ENCODE measurements at regions of chr18 and their contacts with region 1.

Region 1: GRCh38 chr18:13629841-13630715 is 96.3 kb downstream of the FAM210A start:
- DNase-seq: no peak
- H3K4me3 ChIP-seq: peak overlapping the region in 1 of 4 donors; percentile 22
- H3K27ac ChIP-seq: peak overlapping the region; percentile 54 to 60 (median 56)
- H3K4me1 ChIP-seq: peaks cover 9 to 16% (median 12%) of the 10 kb centered on the region in 4 donors
- H3K27me3 ChIP-seq: no peaks in the 10 kb centered on the region
- CTCF ChIP-seq: peak; percentile 80 to 89 (median 85)
- EP300 ChIP-seq: no peak
- POLR2A ChIP-seq: no peak

Region 2: DNA sequence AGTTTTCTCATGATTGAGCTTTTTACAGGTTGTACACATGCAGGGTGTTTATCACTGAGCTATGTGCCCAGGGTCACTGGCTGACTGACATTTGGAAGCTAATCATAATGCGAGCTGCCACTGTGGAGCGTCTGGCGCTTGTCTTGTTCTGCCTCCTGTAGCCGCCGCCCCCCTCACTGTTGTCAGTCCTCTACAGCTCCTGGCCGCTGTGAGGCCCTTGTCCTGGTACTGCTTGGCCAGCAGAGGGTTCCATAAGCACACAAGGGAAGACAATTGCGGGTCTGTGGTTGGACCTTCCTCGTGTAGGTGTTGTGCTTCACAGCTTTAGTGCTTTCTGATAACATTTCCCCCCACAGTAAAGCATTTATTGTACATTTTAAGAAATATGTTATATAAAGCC is 517.1 kb before region 1 on chr18:
- intact Hi-C with region 1: loop called (anchors 10 kb)
- DNase-seq: no peak
- H3K4me3 ChIP-seq: no peak overlapping the region
- H3K27ac ChIP-seq: no peak overlapping the region
- H3K4me1 ChIP-seq: no peaks in the 10 kb centered on the region
- H3K27me3 ChIP-seq: no peaks in the 10 kb centered on the region
- CTCF ChIP-seq: peak; percentile 29 to 43 (median 32)
- EP300 ChIP-seq: no peak
- POLR2A ChIP-seq: no peak

Region 3: DNA sequence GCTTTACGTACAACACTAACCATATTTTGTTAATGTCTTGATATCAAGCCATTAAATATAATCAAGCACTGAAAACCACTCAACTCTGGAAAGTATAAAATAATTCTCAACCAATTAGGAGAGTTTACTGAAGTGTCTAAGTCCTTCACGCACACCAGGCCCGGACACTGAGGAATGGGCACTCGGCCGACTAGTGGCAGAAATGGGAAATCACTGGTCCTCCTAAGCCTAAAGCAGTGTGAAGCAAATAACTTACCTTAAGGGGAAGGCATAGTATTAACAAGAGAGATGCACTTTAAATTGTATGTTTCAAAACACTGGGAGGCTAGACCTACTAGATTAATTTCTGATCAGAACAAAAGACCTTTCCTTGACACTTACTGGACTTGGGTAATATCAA is 50.5 kb after region 1 on chr18:
- intact Hi-C with region 1: no loop called
- DNase-seq: no peak
- H3K4me3 ChIP-seq: no peak overlapping the region
- H3K27ac ChIP-seq: peak overlapping the region in 2 of 4 donors; percentile 2 to 31
- H3K4me1 ChIP-seq: peaks cover 7 to 32% (median 24%) of the 10 kb centered on the region in 4 donors
- H3K27me3 ChIP-seq: no peaks in the 10 kb centered on the region
- CTCF ChIP-seq: peak; percentile 60 to 72 (median 67)
- EP300 ChIP-seq: no peak
- POLR2A ChIP-seq: no peak

Region 4: GRCh38 chr18:14053661-14054060 is 423.6 kb after region 1 on chr18:
- intact Hi-C with region 1: no loop called
- DNase-seq: no peak
- H3K4me3 ChIP-seq: no peak overlapping the region
- H3K27ac ChIP-seq: no peak overlapping the region
- H3K4me1 ChIP-seq: no peaks in the 10 kb centered on the region
- H3K27me3 ChIP-seq: no peaks in the 10 kb centered on the region
- CTCF ChIP-seq: no peak
- EP300 ChIP-seq: no peak
- POLR2A ChIP-seq: no peak